ENCODE measurements at regions of chr4 and their contacts with region 1.

Region 1: DNA sequence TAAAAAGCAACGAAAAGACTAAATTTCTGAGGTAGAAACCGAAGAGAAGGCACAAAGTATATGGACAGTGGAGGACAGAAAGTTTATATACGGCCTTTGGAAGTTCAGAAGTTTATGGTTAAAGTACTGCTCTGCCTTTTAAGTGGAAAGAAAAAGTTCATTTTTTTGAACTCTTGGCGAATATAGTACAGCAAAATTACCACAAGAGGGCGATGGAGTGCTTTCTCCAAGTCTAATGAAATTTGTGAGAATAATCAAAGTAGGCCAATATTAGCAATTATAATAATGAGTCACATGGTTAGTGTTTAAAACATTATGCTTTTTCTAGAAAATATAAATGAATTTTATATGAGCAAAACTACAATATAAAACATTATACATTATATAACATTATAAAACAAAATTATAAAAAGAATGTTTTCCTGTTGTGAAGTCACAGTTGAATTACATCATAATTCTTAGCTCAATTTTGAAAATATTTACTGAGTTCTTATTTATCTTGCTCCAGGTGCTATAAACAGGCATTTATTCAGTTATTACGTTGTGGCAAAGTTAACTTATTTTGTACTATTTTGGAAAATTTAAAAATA is 136.2 kb upstream of the BMPR1B start:
- H3K4me3 ChIP-seq: no peak overlapping the region
- H3K27ac ChIP-seq: no peak overlapping the region
- H3K4me1 ChIP-seq: no peaks in the 10 kb centered on the region
- CTCF ChIP-seq: no peak

Region 2: DNA sequence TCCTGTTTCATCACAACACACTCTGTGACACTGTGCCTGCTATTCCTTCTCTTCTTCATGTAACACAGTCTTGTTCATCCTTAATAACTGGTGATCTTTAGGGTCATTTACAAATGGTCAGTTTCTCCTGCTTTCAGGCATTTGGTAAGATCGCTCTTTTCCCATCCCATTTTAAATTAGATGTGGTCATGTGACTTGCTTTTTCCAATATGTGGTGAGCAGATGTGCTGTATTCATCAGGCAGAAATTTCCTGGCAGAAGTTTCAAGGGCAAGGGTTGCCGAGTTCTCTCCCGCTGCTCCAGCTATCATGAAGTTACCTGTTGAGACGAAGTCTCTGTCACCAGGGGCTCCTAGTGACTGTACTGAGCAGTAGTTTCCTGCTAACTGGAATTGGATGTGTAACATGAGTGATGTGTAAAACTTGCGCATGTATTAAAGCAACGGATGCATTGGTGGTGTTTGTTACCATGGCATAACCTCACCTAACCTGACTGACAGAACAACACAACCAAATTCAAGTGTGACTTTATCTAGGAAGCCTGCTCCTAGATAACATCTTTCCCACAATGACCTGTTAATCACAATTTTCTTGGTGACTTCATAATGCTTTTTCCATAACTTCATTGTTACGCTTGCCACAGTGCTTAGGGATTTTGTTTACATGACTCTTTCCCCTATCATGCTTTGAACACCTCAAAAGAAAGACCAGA is 106.6 kb after region 1 on chr4:
- CTCF ChIA-PET with region 1: interaction called, 13 read pairs
- POLR2A ChIA-PET with region 1: interaction called, 4 read pairs
- H3K4me3 ChIP-seq: no peak overlapping the region
- H3K27ac ChIP-seq: no peak overlapping the region
- H3K4me1 ChIP-seq: no peaks in the 10 kb centered on the region
- CTCF ChIP-seq: no peak

Region 3: GRCh38 chr4:95124906-95125504 is 503.4 kb after region 1 on chr4:
- CTCF ChIA-PET with region 1: interaction called, 13 read pairs
- POLR2A ChIA-PET with region 1: no interaction called
- H3K4me3 ChIP-seq: no peak overlapping the region
- H3K27ac ChIP-seq: no peak overlapping the region
- H3K4me1 ChIP-seq: peaks cover 2% of the 10 kb centered on the region; the same call in 1 of the 2 replicates
- CTCF ChIP-seq: no peak